ENCODE measurements at regions of chr6 and their contacts with region 1.

Region 1: GRCh38 chr6:118709859-118710350 is 58.5 kb upstream of the CEP85L start:
- DNase-seq: peak; percentile 88
- H3K4me3 Mint-ChIP-seq: peak overlapping the region; percentile 95
- H3K27ac Mint-ChIP-seq: peak overlapping the region; percentile 98
- H3K4me1 Mint-ChIP-seq: peaks cover 72% of the 10 kb centered on the region
- H3K27me3 Mint-ChIP-seq: no peaks in the 10 kb centered on the region

Region 2: DNA sequence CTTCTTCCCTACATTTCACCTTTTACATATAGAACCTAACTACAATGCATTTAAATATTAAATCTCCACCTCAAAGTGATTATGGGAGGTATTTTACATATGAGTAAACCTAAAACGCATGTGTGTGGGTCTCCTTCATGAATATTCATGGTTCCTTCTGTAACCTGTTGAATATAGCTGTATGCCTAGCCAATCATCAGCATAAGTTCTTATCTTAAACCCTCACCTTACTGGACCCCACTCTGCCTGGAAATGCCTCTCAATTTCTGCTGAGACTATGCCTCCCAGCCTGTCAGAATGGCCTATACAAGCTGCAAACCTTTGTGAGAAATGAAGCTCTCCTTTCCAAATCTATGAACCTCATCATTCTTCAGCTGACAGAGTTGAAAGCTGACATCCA is 79.8 kb before region 1 on chr6:
- CTCF ChIA-PET with region 1: interaction called, 4 read pairs
- POLR2A ChIA-PET with region 1: interaction called, 4 read pairs
- intact Hi-C with region 1: loop called (anchors 2 kb)
- DNase-seq: no peak
- H3K4me3 Mint-ChIP-seq: no peak overlapping the region
- H3K27ac Mint-ChIP-seq: no peak overlapping the region
- H3K4me1 Mint-ChIP-seq: peaks cover 53% of the 10 kb centered on the region
- H3K27me3 Mint-ChIP-seq: no peaks in the 10 kb centered on the region

Region 3: GRCh38 chr6:118679327-118679901 is 30.5 kb before region 1 on chr6:
- CTCF ChIA-PET with region 1: interaction called, 7 read pairs
- POLR2A ChIA-PET with region 1: interaction called, 4 read pairs
- intact Hi-C with region 1: loop called (anchors 1 kb)
- DNase-seq: no peak
- H3K4me3 Mint-ChIP-seq: no peak overlapping the region
- H3K27ac Mint-ChIP-seq: peak overlapping the region; percentile 43
- H3K4me1 Mint-ChIP-seq: peaks cover 45% of the 10 kb centered on the region
- H3K27me3 Mint-ChIP-seq: no peaks in the 10 kb centered on the region

Region 4: DNA sequence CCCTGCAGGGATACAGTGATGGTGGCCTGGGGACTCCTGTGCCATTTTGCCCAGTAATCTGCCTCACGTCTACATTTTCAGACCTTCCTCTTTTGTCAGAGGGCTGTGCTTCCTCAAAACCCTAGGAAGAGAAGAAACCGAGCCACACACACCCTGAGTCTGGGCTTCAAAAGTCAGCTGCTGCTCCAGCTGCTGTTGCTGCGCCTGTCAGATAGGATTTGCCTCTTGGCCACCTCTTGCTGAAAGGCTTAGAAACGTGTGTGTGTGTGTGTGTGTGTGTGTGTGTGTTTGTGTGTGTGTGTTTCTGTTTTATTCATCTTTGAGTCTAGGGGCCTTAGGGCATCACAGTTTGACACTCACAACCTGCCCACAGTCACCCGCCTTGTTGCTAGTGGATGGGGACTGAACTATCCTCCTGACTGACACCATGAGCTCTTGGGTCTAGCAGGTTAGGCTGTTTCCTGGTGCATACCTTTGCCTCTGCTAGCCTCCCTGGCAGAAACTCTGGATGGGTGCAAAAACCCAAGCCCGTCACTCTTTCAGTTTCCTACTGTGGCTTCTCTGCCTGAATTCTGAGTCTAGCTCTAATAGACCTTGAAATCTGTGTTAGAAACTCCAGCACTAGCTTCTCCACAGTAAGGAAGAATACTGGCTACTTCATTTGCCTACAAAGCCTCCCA is 36.4 kb after region 1 on chr6:
- CTCF ChIA-PET with region 1: no interaction called
- POLR2A ChIA-PET with region 1: no interaction called
- intact Hi-C with region 1: no loop called
- DNase-seq: no peak
- H3K4me3 Mint-ChIP-seq: no peak overlapping the region
- H3K27ac Mint-ChIP-seq: no peak overlapping the region
- H3K4me1 Mint-ChIP-seq: peaks cover 25% of the 10 kb centered on the region
- H3K27me3 Mint-ChIP-seq: no peaks in the 10 kb centered on the region

Region 5: DNA sequence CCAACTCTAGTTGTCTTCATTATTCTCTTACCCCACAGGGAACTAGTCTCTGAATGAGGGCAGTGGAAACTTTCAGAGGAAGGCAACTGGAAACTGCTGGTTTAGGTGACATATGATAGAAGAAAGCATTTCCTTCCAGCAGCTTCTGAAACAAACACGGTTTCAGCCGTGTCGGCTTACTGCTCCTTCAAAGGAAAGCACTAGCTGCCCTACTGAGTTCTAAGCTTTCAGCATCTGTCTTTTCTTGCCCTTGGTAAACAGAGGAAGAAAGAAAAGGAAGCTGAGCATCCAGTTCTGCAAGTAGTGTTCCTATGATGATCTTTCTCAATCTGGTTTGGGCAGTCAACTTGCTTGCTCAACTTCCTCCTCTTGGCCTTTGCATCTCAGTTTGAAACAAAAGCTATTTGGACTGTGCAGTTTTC is 59.0 kb after region 1 on chr6:
- CTCF ChIA-PET with region 1: no interaction called
- POLR2A ChIA-PET with region 1: interaction called, 12 read pairs
- intact Hi-C with region 1: loop called (anchors 1 kb)
- DNase-seq: peak; percentile 49
- H3K4me3 Mint-ChIP-seq: no peak overlapping the region
- H3K27ac Mint-ChIP-seq: peak overlapping the region; percentile 73
- H3K4me1 Mint-ChIP-seq: peaks cover 19% of the 10 kb centered on the region
- H3K27me3 Mint-ChIP-seq: no peaks in the 10 kb centered on the region

Region 6: DNA sequence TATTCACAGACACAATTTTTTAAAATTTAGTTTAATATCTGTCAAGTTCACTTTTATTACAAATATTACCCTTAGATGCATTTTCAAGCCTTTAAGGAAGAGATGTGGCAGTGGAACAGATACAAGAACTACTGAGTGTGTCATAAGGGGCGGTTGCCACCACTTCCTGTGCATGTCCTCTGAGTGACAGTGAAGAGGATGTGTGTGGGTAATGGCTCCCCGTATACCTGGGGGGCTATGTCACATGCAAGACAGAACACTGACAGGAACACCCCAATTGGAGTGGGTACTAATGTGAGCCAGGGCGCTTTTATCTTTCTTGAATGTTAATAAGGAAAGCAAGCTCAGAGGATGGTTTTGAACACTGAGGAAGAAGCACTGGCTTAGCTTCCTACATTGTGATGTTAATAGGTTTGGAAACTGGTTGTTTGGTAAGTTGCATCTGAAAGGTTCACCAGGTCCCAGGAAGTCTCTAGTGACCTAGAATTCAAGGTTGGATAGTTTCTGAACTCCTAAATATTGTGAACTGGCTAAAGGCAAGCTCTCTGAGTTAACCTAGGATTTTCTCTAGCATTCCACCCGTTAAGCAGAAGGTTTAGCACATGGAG is 100.6 kb after region 1 on chr6:
- CTCF ChIA-PET with region 1: no interaction called
- POLR2A ChIA-PET with region 1: interaction called, 3 read pairs
- intact Hi-C with region 1: loop called (anchors 2 kb)
- DNase-seq: peak; percentile 77
- H3K4me3 Mint-ChIP-seq: no peak overlapping the region
- H3K27ac Mint-ChIP-seq: peak overlapping the region; percentile 77
- H3K4me1 Mint-ChIP-seq: peaks cover 55% of the 10 kb centered on the region
- H3K27me3 Mint-ChIP-seq: no peaks in the 10 kb centered on the region

Measured in activated CD4-positive, alpha-beta memory T cell treated with anti-CD3 and anti-CD28 coated beads for 36 hours (primary cell).